CD4-positive, alpha-beta T cell (primary cell): ENCODE measurements at regions of chr17 and their contacts with region 1.

Region 1: GRCh38 chr17:57597531-57598453 is 147.3 kb downstream of the CCDC182 start:
- DNase-seq: peak in 8 of 14 experiments; percentile 10 to 62 (median 34)
- ATAC-seq: no peak
- H3K4me3 ChIP-seq: no peak overlapping the region
- H3K4me3 Mint-ChIP-seq: no peak overlapping the region
- H3K27ac ChIP-seq: no peak overlapping the region
- H3K27ac Mint-ChIP-seq: peak overlapping the region; percentile 87
- H3K4me1 ChIP-seq: peaks cover 55% of the 10 kb centered on the region
- H3K4me1 Mint-ChIP-seq: peaks cover 61% of the 10 kb centered on the region
- H3K27me3 ChIP-seq: no peaks in the 10 kb centered on the region
- H3K27me3 Mint-ChIP-seq: no peaks in the 10 kb centered on the region
- CTCF ChIP-seq: peak; percentile 80

Region 2: GRCh38 chr17:56960596-56961538 is 636.9 kb before region 1 on chr17 and contains the start of gene COIL:
- CTCF ChIA-PET with region 1: no interaction called
- POLR2A ChIA-PET with region 1: no interaction called
- intact Hi-C with region 1: loop called in 1 of 2 experiments (anchors 10 kb)
- DNase-seq: peak; percentile 89 to 96 (median 92)
- ATAC-seq: peak; percentile 97
- H3K4me3 ChIP-seq: peak within 1 kb of the TSS; percentile 68
- H3K4me3 Mint-ChIP-seq: peak within 1 kb of the TSS; percentile 93
- H3K27ac ChIP-seq: peak within 1 kb of the TSS; percentile 82 to 83
- H3K27ac Mint-ChIP-seq: peak within 1 kb of the TSS; percentile 78
- H3K4me1 ChIP-seq: peaks cover 26% of the 10 kb centered on the region
- H3K4me1 Mint-ChIP-seq: peaks cover 27% of the 10 kb centered on the region
- H3K27me3 ChIP-seq: peaks cover 0 to 2% of the 10 kb centered on the region in 2 experiments
- H3K27me3 Mint-ChIP-seq: no peaks in the 10 kb centered on the region
- CTCF ChIP-seq: peak; percentile 96
- total RNA-seq, gene COIL: 19.4 to 20.3 TPM

Region 3: GRCh38 chr17:57671667-57672632 is 74.2 kb after region 1 on chr17:
- CTCF ChIA-PET with region 1: interaction called, 13 read pairs
- POLR2A ChIA-PET with region 1: interaction called, 8 read pairs
- intact Hi-C with region 1: loop called (anchors 1 to 2 kb)
- DNase-seq: peak; percentile 48 to 84 (median 62)
- ATAC-seq: peak; percentile 90
- H3K4me3 ChIP-seq: no peak overlapping the region
- H3K4me3 Mint-ChIP-seq: peak overlapping the region; percentile 48
- H3K27ac ChIP-seq: no peak overlapping the region
- H3K27ac Mint-ChIP-seq: peak overlapping the region; percentile 68
- H3K4me1 ChIP-seq: peaks cover 22% of the 10 kb centered on the region
- H3K4me1 Mint-ChIP-seq: peaks cover 11% of the 10 kb centered on the region
- H3K27me3 ChIP-seq: no peaks in the 10 kb centered on the region
- H3K27me3 Mint-ChIP-seq: no peaks in the 10 kb centered on the region
- CTCF ChIP-seq: peak; percentile 77